Calu3 (cell line): ENCODE measurements at regions of chr17 and their contacts with region 1.

Region 1: DNA sequence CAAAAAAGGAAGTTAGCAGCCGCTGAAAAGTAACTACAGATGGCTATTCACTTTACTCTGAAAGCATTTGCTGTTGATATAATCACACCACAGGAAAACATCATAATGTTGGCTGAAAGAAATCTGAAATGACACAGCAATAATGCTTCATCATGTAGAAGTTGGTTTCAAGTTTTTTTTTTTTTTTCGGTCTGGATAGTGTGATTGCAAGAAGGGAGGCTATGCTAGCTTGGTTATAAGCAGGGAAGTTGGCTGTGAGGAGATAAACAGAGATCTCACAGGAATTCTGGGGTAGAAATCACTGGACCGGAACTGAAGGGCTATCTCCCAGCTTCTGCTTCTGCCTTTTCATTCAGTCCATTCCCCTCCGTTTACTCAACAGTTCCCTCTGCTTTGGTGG is 57.9 kb downstream of the MYO1D start:
- DNase-seq: no peak
- H3K4me3 Mint-ChIP-seq: no peak overlapping the region
- H3K27ac Mint-ChIP-seq: peak overlapping the region; percentile 45
- H3K4me1 Mint-ChIP-seq: peaks cover 20% of the 10 kb centered on the region
- H3K27me3 Mint-ChIP-seq: no peaks in the 10 kb centered on the region
- CTCF ChIP-seq: no peak

Region 2: GRCh38 chr17:32127158-32127897 is 691.7 kb before region 1 on chr17:
- CTCF ChIA-PET with region 1: no interaction called
- intact Hi-C with region 1: no loop called
- DNase-seq: peak; percentile 78
- H3K4me3 Mint-ChIP-seq: peak overlapping the region; percentile 86
- H3K27ac Mint-ChIP-seq: peak overlapping the region; percentile 77
- H3K4me1 Mint-ChIP-seq: peaks cover 17% of the 10 kb centered on the region
- H3K27me3 Mint-ChIP-seq: no peaks in the 10 kb centered on the region
- CTCF ChIP-seq: no peak

Region 3: DNA sequence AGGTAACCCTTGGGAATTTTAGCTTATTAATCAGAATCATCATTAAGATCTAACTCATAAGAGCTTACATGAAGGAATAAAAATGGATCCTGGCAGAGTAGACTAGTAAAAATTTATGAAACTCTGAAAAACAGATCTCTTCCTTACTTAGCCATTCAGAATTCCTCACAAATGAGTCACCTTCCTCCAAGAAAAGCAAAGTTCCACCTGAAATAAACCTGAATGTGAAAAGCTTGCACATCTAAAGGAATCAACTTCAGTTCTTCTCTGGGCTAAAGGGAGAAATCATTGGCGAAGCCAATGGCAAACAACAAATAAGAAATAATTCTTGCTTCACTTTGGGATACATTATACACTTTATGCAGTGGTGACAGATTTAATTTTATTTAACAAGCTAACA is 35.2 kb after region 1 on chr17:
- CTCF ChIA-PET with region 1: no interaction called
- intact Hi-C with region 1: loop called (anchors 5 kb)
- DNase-seq: no peak
- H3K4me3 Mint-ChIP-seq: no peak overlapping the region
- H3K27ac Mint-ChIP-seq: no peak overlapping the region
- H3K4me1 Mint-ChIP-seq: peaks cover 20% of the 10 kb centered on the region
- H3K27me3 Mint-ChIP-seq: no peaks in the 10 kb centered on the region
- CTCF ChIP-seq: no peak